ENCODE measurements at regions of chr5 and their contacts with region 1.

Region 1: GRCh38 chr5:151126199-151126645 is 31.4 kb downstream of the ANXA6 start:
- DNase-seq: no peak
- H3K4me3 ChIP-seq: no peak overlapping the region
- H3K27ac ChIP-seq: peak overlapping the region in 1 of 4 donors; percentile 1
- H3K4me1 ChIP-seq: peaks cover 21 to 60% (median 55%) of the 10 kb centered on the region in 4 donors
- H3K27me3 ChIP-seq: no peaks in the 10 kb centered on the region
- CTCF ChIP-seq: peak; percentile 67 to 86 (median 80)
- EP300 ChIP-seq: no peak
- POLR2A ChIP-seq: no peak

Region 2: DNA sequence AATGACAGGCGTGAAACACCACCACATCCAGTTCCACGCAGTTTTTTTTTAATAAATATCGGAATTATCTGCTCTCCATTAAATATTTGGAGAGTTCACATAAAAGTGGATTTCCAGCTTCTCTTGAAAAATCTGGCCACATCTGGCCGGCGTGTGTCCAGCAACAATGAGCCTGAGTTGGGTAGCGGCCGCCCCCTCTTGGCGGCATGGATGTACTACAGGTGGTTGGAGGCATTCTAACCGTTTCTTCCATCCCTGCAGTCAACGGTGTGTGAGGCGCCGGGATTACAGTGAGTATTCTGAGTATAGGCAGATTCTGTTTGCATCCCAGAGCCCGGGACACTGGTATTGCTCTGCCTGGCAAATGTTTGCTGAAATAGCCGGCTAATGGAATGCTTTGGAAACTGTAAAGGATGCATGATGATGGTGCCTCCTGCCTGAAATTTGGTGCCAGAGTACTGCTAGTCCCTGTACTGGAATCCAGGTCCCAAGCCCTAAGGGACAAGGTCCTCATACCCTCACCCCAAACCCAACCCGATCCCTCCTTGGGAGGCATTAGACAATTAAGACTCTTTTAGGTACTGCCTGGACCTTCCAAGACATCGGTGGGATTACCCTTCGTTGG is 113.1 kb after region 1 on chr5:
- intact Hi-C with region 1: loop called (anchors 2 kb)
- DNase-seq: no peak
- H3K4me3 ChIP-seq: peak overlapping the region; percentile 41 to 48 (median 44)
- H3K27ac ChIP-seq: peak overlapping the region; percentile 81 to 85 (median 83)
- H3K4me1 ChIP-seq: peaks cover 19 to 41% (median 37%) of the 10 kb centered on the region in 4 donors
- H3K27me3 ChIP-seq: no peaks in the 10 kb centered on the region
- CTCF ChIP-seq: peak; percentile 61 to 81 (median 77)
- EP300 ChIP-seq: no peak
- POLR2A ChIP-seq: no peak

Region 3: GRCh38 chr5:151328734-151329133 is 202.5 kb after region 1 on chr5:
- intact Hi-C with region 1: no loop called
- DNase-seq: peak; percentile 72
- H3K4me3 ChIP-seq: no peak overlapping the region
- H3K27ac ChIP-seq: no peak overlapping the region
- H3K4me1 ChIP-seq: no peaks in the 10 kb centered on the region
- H3K27me3 ChIP-seq: no peaks in the 10 kb centered on the region
- CTCF ChIP-seq: no peak
- EP300 ChIP-seq: no peak
- POLR2A ChIP-seq: no peak